ENCODE measurements at regions of chr14 and their contacts with region 1.

Region 1: DNA sequence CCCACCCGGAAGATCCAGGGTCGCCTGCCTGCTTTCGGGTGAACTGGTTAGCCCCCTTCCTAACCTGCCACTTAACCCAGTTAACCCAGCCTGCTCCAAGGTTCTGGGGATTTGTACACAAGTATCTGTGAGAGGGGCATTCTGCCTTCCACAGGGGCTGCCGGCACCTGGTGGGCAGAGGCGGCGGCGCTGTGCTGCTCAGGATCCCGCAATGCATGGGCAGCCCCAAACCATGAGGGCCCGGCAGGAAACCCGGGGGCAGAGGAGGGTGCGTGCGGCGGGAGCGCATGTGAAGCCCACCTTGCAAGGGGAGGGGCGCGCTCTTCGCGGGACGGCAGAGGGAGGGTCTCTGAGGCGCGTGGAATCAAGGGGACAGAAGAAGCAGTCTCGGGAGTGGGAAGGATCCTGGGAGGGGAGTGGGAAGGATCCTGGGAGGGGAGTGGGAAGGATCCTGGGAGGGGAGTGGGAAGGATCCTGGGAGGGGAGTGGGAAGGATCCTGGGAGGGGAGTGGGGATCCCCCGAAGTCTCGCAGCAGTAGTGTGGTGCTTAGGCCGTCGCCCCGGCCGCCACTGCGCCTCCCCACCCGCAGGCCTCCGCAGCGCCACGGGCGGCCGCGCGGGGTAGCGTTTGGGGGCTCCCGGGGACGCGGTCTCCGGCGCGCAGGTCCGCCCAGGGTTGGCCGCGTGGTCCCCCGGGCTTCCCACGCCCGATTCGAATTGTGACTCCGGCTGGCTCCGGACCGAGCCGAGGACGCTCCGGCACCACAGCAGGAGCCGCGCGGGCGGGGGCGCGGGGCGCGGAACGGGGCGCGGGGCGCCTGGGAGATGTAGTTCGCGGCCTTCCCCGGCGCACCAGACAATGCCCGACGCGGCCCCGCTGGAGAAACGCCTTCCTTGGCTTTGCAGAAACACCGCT is 4.9 kb upstream of the MTA1 start:
- DNase-seq: peak; percentile 67 to 90 (median 82)
- H3K4me3 ChIP-seq: peak overlapping the region; percentile 33 to 69 (median 57)
- H3K27ac ChIP-seq: peak overlapping the region in 57 of 59 donors; percentile 2 to 83 (median 68)
- H3K27me3 ChIP-seq: peaks cover 0 to 13% (median 0%) of the 10 kb centered on the region in 45 donors
- CTCF ChIP-seq: peak in 55 of 56 donors; percentile 24 to 84 (median 64)

Region 2: DNA sequence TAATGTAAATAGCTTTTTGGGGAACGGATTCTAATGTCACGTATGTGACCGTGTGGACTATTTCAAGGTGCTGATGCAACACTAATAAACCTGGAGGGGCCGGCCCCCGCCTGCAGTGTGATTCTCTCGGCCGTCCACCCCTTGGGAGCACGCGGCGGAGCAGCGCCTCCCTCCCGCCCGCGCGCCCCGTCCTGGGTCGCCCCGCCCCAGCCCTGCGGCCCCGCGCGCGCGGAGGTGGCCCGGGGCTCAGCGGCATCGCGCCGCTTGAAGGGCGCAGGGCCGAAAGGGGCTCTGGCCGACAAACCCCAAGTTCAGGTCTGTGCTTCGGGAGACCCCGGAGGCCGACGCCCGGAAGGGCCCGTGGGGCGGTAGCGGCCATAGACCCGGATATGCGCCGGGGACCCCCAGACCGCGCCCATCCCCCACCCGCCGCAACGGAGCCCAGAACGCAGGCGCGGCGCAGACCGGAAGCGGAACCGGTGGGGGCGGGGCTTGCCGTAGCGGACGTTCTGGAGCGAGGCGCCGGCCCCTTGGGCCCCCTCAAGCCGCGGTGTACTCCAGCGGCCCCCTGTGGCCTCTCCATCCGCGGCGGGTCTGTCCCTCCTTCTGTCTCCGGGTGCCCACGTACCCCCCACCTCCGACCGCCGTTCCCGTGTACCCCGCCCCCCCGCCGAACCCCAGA is 16.5 kb before region 1 on chr14 and contains the start of gene TEX22:
- intact Hi-C with region 1: loop called in 1 of 2 experiments (anchors 2 kb)
- DNase-seq: peak; percentile 72 to 91 (median 82)
- H3K4me3 ChIP-seq: peak within 1 kb of the TSS; percentile 70 to 98 (median 88)
- H3K27ac ChIP-seq: peak within 1 kb of the TSS; percentile 36 to 98 (median 91)
- H3K27me3 ChIP-seq: no peaks in the 10 kb centered on the region
- CTCF ChIP-seq: peak in 51 of 56 donors; percentile 20 to 72 (median 46)
- total RNA-seq, gene TEX22: 0.38 to 13.1 (median 3.6) TPM

Region 3: GRCh38 chr14:105473677-105474482 is 59.2 kb after region 1 on chr14:
- intact Hi-C with region 1: loop called in 1 of 2 experiments (anchors 5 kb)
- DNase-seq: peak in 8 of 10 donors; percentile 40 to 83 (median 66)
- H3K4me3 ChIP-seq: peak overlapping the region; percentile 29 to 90 (median 57)
- H3K27ac ChIP-seq: peak overlapping the region in 56 of 59 donors; percentile 5 to 94 (median 76)
- H3K27me3 ChIP-seq: no peaks in the 10 kb centered on the region
- CTCF ChIP-seq: no peak